T-cell (primary cell): ENCODE measurements at regions of chr1 and their contacts with region 1.

Region 1: DNA sequence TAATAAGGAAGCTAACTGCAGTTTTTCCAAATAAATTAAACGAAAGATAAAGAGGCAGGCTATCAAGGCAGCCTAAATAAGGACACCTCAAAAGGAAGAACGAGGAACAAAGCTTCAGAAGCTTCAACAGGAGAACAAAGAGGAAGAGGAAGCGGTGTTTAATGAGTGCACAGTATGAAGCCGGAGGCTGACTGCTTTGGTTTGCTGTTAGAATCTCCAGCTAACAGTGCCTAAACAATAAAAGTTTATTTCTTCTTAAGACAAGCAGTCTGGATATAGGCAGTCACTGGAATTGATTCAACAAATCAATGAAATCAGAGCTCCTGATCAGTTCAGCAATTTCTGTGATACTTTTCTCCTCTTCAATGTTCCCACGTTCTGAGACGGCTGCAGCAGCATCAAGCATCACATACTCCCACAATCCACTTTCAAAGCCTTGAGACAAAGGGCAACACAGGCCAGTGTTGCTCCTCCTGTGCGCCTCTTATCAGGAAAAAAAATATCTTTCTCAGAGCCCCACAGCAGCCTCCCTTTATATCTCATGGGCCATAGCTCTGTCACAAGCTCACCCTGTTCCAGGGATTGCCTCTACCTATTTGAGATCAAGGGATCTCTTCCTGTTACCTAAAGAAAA is 365.6 kb upstream of the ST6GALNAC5 start:
- DNase-seq: peak in 1 of 35 experiments; percentile 12
- ATAC-seq: peak in 3 of 4 experiments; percentile 60 to 74 (median 63)
- H3K4me3 ChIP-seq: no peak overlapping the region
- H3K4me3 Mint-ChIP-seq: peak overlapping the region in 2 of 3 donors; percentile 23 to 48
- H3K27ac ChIP-seq: no peak overlapping the region
- H3K27ac Mint-ChIP-seq: no peak overlapping the region
- H3K4me1 ChIP-seq: peaks cover 3 to 10% of the 10 kb centered on the region in 2 experiments
- H3K4me1 Mint-ChIP-seq: peaks cover 11 to 18% (median 15%) of the 10 kb centered on the region in 3 donors
- H3K27me3 ChIP-seq: no peaks in the 10 kb centered on the region
- H3K27me3 Mint-ChIP-seq: no peaks in the 10 kb centered on the region

Region 2: GRCh38 chr1:77103486-77103885 is 601.8 kb after region 1 on chr1:
- CTCF ChIA-PET with region 1: no interaction called
- POLR2A ChIA-PET with region 1: interaction called in 1 of 2 experiments, 10 read pairs
- DNase-seq: no peak
- ATAC-seq: no peak
- H3K4me3 ChIP-seq: no peak overlapping the region
- H3K4me3 Mint-ChIP-seq: no peak overlapping the region
- H3K27ac ChIP-seq: no peak overlapping the region
- H3K27ac Mint-ChIP-seq: no peak overlapping the region
- H3K4me1 ChIP-seq: no peaks in the 10 kb centered on the region
- H3K4me1 Mint-ChIP-seq: no peaks in the 10 kb centered on the region
- H3K27me3 ChIP-seq: no peaks in the 10 kb centered on the region
- H3K27me3 Mint-ChIP-seq: no peaks in the 10 kb centered on the region